Esophagus muscularis mucosa (tissue), 4 donors: ENCODE measurements at regions of chr2 and their contacts with region 1.

Region 1: DNA sequence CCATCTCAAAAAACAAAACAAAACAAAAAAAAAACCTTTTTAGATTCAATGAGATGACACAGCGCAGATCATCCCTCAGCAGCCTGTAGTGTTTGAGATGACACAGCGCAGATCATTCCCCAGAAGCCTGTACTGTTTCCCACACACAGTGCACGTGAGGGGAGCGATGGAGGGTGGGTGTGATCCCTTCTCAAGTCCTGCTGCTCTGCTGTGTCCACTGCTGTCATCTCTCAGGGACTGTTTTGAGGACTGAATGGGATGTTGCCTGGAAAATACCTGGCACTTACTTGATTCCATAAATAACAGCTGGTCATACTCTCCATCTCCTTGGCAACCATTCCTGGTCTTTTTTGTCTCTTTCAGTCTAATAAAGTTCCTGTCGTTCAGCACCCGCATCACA is 25.7 kb downstream of the TGOLN2 start:
- DNase-seq: no peak
- H3K4me3 ChIP-seq: no peak overlapping the region
- H3K27ac ChIP-seq: no peak overlapping the region
- H3K4me1 ChIP-seq: peaks cover 0 to 20% (median 10%) of the 10 kb centered on the region in 4 donors
- H3K27me3 ChIP-seq: no peaks in the 10 kb centered on the region
- CTCF ChIP-seq: no peak
- EP300 ChIP-seq: no peak
- POLR2A ChIP-seq: no peak

Region 2: GRCh38 chr2:85066874-85067351 is 235.2 kb before region 1 on chr2:
- intact Hi-C with region 1: loop called (anchors 1 kb)
- DNase-seq: peak; percentile 94
- H3K4me3 ChIP-seq: peak overlapping the region; percentile 33 to 51 (median 38)
- H3K27ac ChIP-seq: no peak overlapping the region
- H3K4me1 ChIP-seq: peaks cover 3 to 16% (median 10%) of the 10 kb centered on the region in 4 donors
- H3K27me3 ChIP-seq: peaks cover 0 to 9% (median 0%) of the 10 kb centered on the region in 4 donors
- CTCF ChIP-seq: peak; percentile 78 to 83 (median 81)
- EP300 ChIP-seq: no peak
- POLR2A ChIP-seq: no peak

Region 3: DNA sequence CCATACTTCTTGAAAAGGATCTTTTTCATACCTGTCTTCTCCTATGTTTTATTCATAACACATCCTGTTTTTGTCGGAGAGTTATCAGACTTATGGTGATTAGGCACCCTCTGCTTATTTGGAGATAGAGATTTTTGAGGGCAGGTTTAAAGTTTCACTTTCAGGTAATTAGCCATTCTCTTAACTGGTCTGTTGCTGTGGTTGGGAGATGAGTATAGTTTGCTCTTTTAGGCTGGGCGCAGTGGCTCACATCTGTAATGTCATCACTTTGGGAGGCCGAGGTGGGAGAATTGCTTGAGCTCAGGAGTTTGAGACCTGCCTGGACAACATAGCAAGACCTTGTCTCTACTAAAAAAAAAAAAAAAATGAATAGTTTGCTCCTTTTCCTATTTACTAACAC is 340.6 kb after region 1 on chr2:
- intact Hi-C with region 1: no loop called
- DNase-seq: no peak
- H3K4me3 ChIP-seq: no peak overlapping the region
- H3K27ac ChIP-seq: no peak overlapping the region
- H3K4me1 ChIP-seq: peaks cover 0 to under 1% (median under 1%) of the 10 kb centered on the region in 4 donors
- H3K27me3 ChIP-seq: no peaks in the 10 kb centered on the region
- CTCF ChIP-seq: no peak
- EP300 ChIP-seq: no peak
- POLR2A ChIP-seq: no peak